Activated CD8-positive, alpha-beta T cell treated with anti-CD3 and anti-CD28 coated beads for 36 hours (primary cell): ENCODE measurements at regions of chr18 and their contacts with region 1.

Region 1: DNA sequence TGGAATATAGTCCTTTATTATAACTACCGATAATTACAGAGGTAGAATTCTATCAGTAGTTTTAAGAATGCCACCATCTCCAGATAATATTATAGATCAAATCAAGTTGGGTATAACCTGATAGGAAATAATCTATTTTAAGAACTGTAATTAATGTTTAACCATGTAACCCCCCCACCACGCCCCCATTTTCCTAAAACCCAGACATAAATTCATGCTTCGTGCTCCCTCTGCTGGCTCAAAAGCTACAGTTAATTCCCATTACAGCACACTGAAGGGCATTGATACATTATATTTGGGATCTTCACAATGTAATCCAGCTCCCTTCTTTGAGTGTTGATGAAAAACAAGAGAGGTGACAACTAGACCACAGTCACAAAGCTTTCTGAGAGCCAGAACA is 228.0 kb upstream of the SMAD7 start:
- DNase-seq: peak; percentile 35
- ATAC-seq: no peak
- H3K4me3 Mint-ChIP-seq: no peak overlapping the region
- H3K27ac Mint-ChIP-seq: no peak overlapping the region
- H3K4me1 Mint-ChIP-seq: peaks cover 26% of the 10 kb centered on the region
- H3K27me3 Mint-ChIP-seq: no peaks in the 10 kb centered on the region
- CTCF ChIP-seq: peak; percentile 66

Region 2: DNA sequence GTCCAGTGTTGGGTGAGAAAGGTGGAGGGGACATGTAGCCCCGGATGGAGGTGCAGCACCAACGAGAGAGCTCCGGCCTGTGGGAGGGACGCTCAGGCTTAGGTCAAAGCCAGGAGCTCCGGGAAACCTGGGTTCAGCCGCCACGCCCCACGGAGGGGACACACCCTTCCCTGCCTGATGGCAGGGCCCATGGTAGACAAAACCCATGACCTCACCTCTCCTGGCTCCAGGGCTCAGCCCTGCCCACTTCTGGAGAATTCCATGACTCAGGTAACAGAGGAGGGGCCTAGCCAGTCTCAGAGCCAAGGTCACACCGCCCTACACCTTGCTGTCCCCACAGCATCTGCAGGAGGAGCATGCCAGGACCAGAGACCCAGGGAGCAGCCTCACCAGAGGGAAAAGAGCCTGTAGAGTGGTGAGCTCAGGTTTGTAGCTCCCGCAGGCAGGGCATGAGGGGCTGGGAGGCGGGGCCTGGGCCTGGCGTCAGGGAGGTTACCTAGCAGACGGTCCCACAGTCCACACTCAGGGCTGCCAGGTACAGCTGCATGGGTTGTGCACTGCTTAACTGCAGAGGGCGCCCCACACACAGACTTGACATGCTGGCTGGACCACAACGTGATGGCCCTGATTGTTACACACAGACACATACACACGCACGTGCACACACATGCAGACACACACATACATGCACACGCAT is 157.2 kb before region 1 on chr18:
- CTCF ChIA-PET with region 1: interaction called, 5 read pairs
- POLR2A ChIA-PET with region 1: no interaction called
- intact Hi-C with region 1: loop called (anchors 10 kb)
- DNase-seq: peak; percentile 78
- ATAC-seq: peak; percentile 89
- H3K4me3 Mint-ChIP-seq: no peak overlapping the region
- H3K27ac Mint-ChIP-seq: no peak overlapping the region
- H3K4me1 Mint-ChIP-seq: peaks cover 2% of the 10 kb centered on the region
- H3K27me3 Mint-ChIP-seq: no peaks in the 10 kb centered on the region
- CTCF ChIP-seq: peak; percentile 68

Region 3: DNA sequence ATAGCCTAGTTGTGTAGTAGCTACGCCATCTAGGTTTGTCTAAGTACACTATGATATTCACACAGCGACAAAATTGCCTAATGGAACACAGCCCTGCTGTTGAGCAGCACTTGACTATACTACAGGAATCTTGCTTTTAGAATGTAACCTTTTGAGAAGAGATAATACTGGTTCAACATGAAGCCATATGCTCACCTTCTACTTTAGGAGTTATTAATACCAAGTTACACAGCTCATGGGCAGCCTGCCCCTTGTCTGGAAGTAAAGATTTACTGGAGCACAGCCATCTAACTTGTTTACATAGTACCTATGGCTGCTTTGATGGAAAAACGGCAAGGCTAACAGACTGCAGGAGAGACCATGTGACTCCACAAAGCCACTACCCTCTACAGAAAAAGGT is 106.9 kb after region 1 on chr18:
- CTCF ChIA-PET with region 1: no interaction called
- POLR2A ChIA-PET with region 1: no interaction called
- intact Hi-C with region 1: no loop called
- DNase-seq: no peak
- ATAC-seq: no peak
- H3K4me3 Mint-ChIP-seq: no peak overlapping the region
- H3K27ac Mint-ChIP-seq: no peak overlapping the region
- H3K4me1 Mint-ChIP-seq: no peaks in the 10 kb centered on the region
- H3K27me3 Mint-ChIP-seq: no peaks in the 10 kb centered on the region
- CTCF ChIP-seq: no peak